Esophagus muscularis mucosa (tissue), 4 donors: ENCODE measurements at regions of chr2 and their contacts with region 1.

Region 1: GRCh38 chr2:46296840-46297545 is at the start of gene EPAS1:
- DNase-seq: peak; percentile 97
- H3K4me3 ChIP-seq: peak within 1 kb of the TSS; percentile 66 to 88 (median 80)
- H3K27ac ChIP-seq: peak within 1 kb of the TSS; percentile 90 to 94 (median 92)
- H3K4me1 ChIP-seq: peaks cover 4 to 42% (median 34%) of the 10 kb centered on the region in 4 donors
- H3K27me3 ChIP-seq: no peaks in the 10 kb centered on the region
- CTCF ChIP-seq: no peak
- EP300 ChIP-seq: no peak
- POLR2A ChIP-seq: peak; percentile 75
- total RNA-seq, gene EPAS1: 113 to 225 (median 183) TPM

Region 2: GRCh38 chr2:45993476-45993991 is 303.5 kb before region 1 on chr2:
- intact Hi-C with region 1: loop called (anchors 10 kb)
- DNase-seq: peak; percentile 92
- H3K4me3 ChIP-seq: no peak overlapping the region
- H3K27ac ChIP-seq: peak overlapping the region; percentile 59 to 76 (median 66)
- H3K4me1 ChIP-seq: peaks cover 25 to 42% (median 40%) of the 10 kb centered on the region in 4 donors
- H3K27me3 ChIP-seq: no peaks in the 10 kb centered on the region
- CTCF ChIP-seq: peak; percentile 73 to 86 (median 79)
- EP300 ChIP-seq: no peak
- POLR2A ChIP-seq: no peak

Region 3: DNA sequence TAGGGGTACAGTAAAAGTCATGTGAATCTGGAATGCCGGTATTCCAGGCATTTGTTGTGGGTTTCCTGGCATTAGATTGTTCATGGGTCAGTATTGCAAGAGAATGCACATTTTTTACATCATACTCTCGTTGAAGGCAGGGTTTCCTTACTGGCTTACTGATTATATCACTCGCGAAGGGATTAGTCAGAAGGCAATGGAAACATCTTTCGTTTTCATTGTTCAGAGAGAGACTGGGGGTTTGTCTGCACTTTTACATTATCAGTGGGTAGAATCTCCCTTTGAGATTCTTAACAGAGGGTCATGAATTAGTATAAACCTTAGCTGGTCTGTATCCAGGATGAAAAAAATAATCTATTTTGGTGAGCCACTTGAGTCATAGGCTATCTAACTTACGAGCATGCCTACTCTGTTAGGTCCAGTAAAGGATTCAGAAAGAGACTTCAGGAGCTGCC is 229.1 kb before region 1 on chr2:
- intact Hi-C with region 1: loop called (anchors 5 kb)
- DNase-seq: no peak
- H3K4me3 ChIP-seq: no peak overlapping the region
- H3K27ac ChIP-seq: peak overlapping the region in 1 of 4 donors; percentile 8
- H3K4me1 ChIP-seq: peaks cover 6 to 24% (median 11%) of the 10 kb centered on the region in 4 donors
- H3K27me3 ChIP-seq: no peaks in the 10 kb centered on the region
- CTCF ChIP-seq: no peak
- EP300 ChIP-seq: no peak
- POLR2A ChIP-seq: no peak

Region 4: GRCh38 chr2:46142546-46143428 is 154.2 kb before region 1 on chr2:
- intact Hi-C with region 1: no loop called
- DNase-seq: no peak
- H3K4me3 ChIP-seq: no peak overlapping the region
- H3K27ac ChIP-seq: no peak overlapping the region
- H3K4me1 ChIP-seq: peaks cover 0 to 8% (median 3%) of the 10 kb centered on the region in 4 donors
- H3K27me3 ChIP-seq: no peaks in the 10 kb centered on the region
- CTCF ChIP-seq: no peak
- EP300 ChIP-seq: no peak
- POLR2A ChIP-seq: no peak